SK-N-SH (cell line): ENCODE measurements at regions of chr9 and their contacts with region 1.

Region 1: GRCh38 chr9:77433675-77434445 is 214.3 kb downstream of the GNA14 start:
- DNase-seq: peak; percentile 85
- H3K4me3 ChIP-seq: no peak overlapping the region; a peak in 1 of 4 replicates
- H3K27ac ChIP-seq: no peak overlapping the region
- H3K4me1 ChIP-seq: peaks cover 11 to 13% of the 10 kb centered on the region in 2 experiments; a peak in 2 of 4 replicates
- H3K27me3 ChIP-seq: no peaks in the 10 kb centered on the region
- CTCF ChIP-seq: peak; percentile 99
- EP300 ChIP-seq: no peak
- RAD21 ChIP-seq: peak; percentile 100

Region 2: GRCh38 chr9:77417566-77417965 is 16.3 kb before region 1 on chr9:
- CTCF ChIA-PET with region 1: interaction called, 14 read pairs
- POLR2A ChIA-PET with region 1: no interaction called
- DNase-seq: no peak
- H3K4me3 ChIP-seq: no peak overlapping the region
- H3K27ac ChIP-seq: no peak overlapping the region
- H3K4me1 ChIP-seq: peaks cover 0 to 4% of the 10 kb centered on the region in 2 experiments; a peak in 1 of 4 replicates
- H3K27me3 ChIP-seq: no peaks in the 10 kb centered on the region
- CTCF ChIP-seq: no peak
- EP300 ChIP-seq: no peak
- RAD21 ChIP-seq: no peak

Region 3: GRCh38 chr9:77507212-77507961 is 73.5 kb after region 1 on chr9:
- CTCF ChIA-PET with region 1: no interaction called
- POLR2A ChIA-PET with region 1: no interaction called
- DNase-seq: no peak
- H3K4me3 ChIP-seq: no peak overlapping the region
- H3K27ac ChIP-seq: 0 out of 4 replicates have a peak overlapping the region, but pooled peaks of 1 of the 2 experiments have one; percentile 25
- H3K4me1 ChIP-seq: peaks cover 0 to 19% of the 10 kb centered on the region in 2 experiments; a peak in 2 of 4 replicates
- H3K27me3 ChIP-seq: no peaks in the 10 kb centered on the region
- CTCF ChIP-seq: no peak
- EP300 ChIP-seq: no peak
- RAD21 ChIP-seq: no peak

Region 4: GRCh38 chr9:77751341-77752091 is 317.7 kb after region 1 on chr9:
- CTCF ChIA-PET with region 1: interaction called, 109 read pairs
- POLR2A ChIA-PET with region 1: no interaction called
- DNase-seq: peak; percentile 72
- H3K4me3 ChIP-seq: peak overlapping the region; percentile 1 to 27; a peak in 1 of 4 replicates
- H3K27ac ChIP-seq: peak overlapping the region; percentile 78 to 100
- H3K4me1 ChIP-seq: peaks cover 46 to 51% of the 10 kb centered on the region in 2 experiments; a peak in 3 of 4 replicates
- H3K27me3 ChIP-seq: no peaks in the 10 kb centered on the region
- CTCF ChIP-seq: peak; percentile 78
- EP300 ChIP-seq: peak; percentile 1 to 72; a peak in 2 of 4 replicates
- RAD21 ChIP-seq: peak; percentile 94

Region 5: GRCh38 chr9:78035383-78035993 is 601.6 kb after region 1 on chr9:
- CTCF ChIA-PET with region 1: interaction called, 24 read pairs
- POLR2A ChIA-PET with region 1: no interaction called
- DNase-seq: peak; percentile 65
- H3K4me3 ChIP-seq: peak overlapping the region in 1 of 2 experiments; percentile 14; a peak in 1 of 4 replicates
- H3K27ac ChIP-seq: peak overlapping the region in 1 of 2 experiments; percentile 36; a peak in 3 of 4 replicates
- H3K4me1 ChIP-seq: peaks cover 0 to 9% of the 10 kb centered on the region in 2 experiments; a peak in 3 of 4 replicates
- H3K27me3 ChIP-seq: no peaks in the 10 kb centered on the region
- CTCF ChIP-seq: peak; percentile 85
- EP300 ChIP-seq: no peak
- RAD21 ChIP-seq: peak; percentile 92